Activated naive CD4-positive, alpha-beta T cell treated with anti-CD3 and anti-CD28 coated beads for 36 hours (primary cell): ENCODE measurements at regions of chr7 and their contacts with region 1.

Region 1: GRCh38 chr7:150435390-150436073 is 14.9 kb upstream of the GIMAP8 start:
- DNase-seq: peak; percentile 2
- H3K4me3 Mint-ChIP-seq: no peak overlapping the region
- H3K27ac Mint-ChIP-seq: no peak overlapping the region
- H3K4me1 Mint-ChIP-seq: peaks cover 19% of the 10 kb centered on the region
- H3K27me3 Mint-ChIP-seq: no peaks in the 10 kb centered on the region

Region 2: GRCh38 chr7:150368096-150368883 is 67.2 kb before region 1 on chr7 and contains the start of gene REPIN1:
- CTCF ChIA-PET with region 1: interaction called, 11 read pairs
- intact Hi-C with region 1: no loop called
- DNase-seq: peak; percentile 84
- H3K4me3 Mint-ChIP-seq: peak within 1 kb of the TSS; percentile 94
- H3K27ac Mint-ChIP-seq: peak within 1 kb of the TSS; percentile 95
- H3K4me1 Mint-ChIP-seq: peaks cover 45% of the 10 kb centered on the region
- H3K27me3 Mint-ChIP-seq: no peaks in the 10 kb centered on the region
- total RNA-seq, gene REPIN1: 45.7 to 49.3 TPM

Region 3: DNA sequence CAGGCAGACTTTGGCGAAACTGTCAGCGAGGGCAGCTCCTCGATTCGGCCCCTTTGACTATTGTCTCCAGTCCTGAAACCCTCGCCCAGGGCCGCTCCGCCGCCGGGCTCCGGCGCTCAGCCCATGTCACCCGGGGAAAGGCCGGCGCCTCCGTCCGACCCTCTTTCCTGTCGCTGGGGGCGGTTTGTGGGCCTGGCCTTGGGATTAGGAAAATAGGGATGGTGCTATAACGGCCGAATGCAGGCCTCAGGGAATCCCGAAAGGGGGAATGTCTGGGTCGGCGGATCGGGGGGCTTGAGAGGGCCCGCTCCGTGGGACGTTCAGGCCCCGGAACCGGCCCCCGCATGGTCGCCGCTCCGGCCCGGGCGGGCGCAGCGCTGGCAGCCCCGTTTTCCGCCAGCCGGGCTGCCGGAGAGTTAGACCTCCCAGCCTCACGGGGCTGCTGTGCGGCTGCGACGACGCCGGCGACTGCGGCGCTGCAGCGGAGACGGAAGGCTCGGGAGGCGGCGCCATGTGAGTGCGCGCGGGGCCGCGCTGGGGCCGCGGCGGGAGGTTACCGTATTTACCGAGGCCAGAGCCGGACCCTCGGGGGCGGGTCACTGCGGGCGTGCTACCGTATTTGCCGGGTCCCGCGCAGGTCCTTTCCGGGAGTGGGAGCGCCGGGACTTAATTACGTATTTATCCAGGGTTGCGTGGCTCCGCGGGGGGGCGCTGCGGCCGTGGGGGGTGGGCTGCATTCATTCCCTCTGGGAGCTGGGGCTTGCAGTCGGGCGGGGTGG is 30.5 kb before region 1 on chr7:
- CTCF ChIA-PET with region 1: no interaction called
- intact Hi-C with region 1: loop called (anchors 2 kb)
- DNase-seq: peak; percentile 76
- H3K4me3 Mint-ChIP-seq: peak overlapping the region; percentile 85
- H3K27ac Mint-ChIP-seq: peak overlapping the region; percentile 83
- H3K4me1 Mint-ChIP-seq: peaks cover 29% of the 10 kb centered on the region
- H3K27me3 Mint-ChIP-seq: no peaks in the 10 kb centered on the region

Region 4: GRCh38 chr7:150520145-150520544 is 84.6 kb after region 1 on chr7:
- CTCF ChIA-PET with region 1: no interaction called
- intact Hi-C with region 1: no loop called
- DNase-seq: peak; percentile 68
- H3K4me3 Mint-ChIP-seq: peak overlapping the region; percentile 81
- H3K27ac Mint-ChIP-seq: peak overlapping the region; percentile 99
- H3K4me1 Mint-ChIP-seq: peaks cover 38% of the 10 kb centered on the region
- H3K27me3 Mint-ChIP-seq: no peaks in the 10 kb centered on the region

Region 5: GRCh38 chr7:150737265-150738055 is 301.9 kb after region 1 on chr7 and contains the start of gene GIMAP5:
- CTCF ChIA-PET with region 1: no interaction called
- intact Hi-C with region 1: no loop called
- DNase-seq: peak; percentile 66
- H3K4me3 Mint-ChIP-seq: peak within 1 kb of the TSS; percentile 88
- H3K27ac Mint-ChIP-seq: peak within 1 kb of the TSS; percentile 95
- H3K4me1 Mint-ChIP-seq: peaks cover 72% of the 10 kb centered on the region
- H3K27me3 Mint-ChIP-seq: no peaks in the 10 kb centered on the region
- total RNA-seq, gene GIMAP5: 32.1 to 32.3 TPM